Activated CD4-positive, alpha-beta memory T cell treated with anti-CD3 and anti-CD28 coated beads for 36 hours (primary cell): ENCODE measurements at regions of chr12 and their contacts with region 1.

Region 1: DNA sequence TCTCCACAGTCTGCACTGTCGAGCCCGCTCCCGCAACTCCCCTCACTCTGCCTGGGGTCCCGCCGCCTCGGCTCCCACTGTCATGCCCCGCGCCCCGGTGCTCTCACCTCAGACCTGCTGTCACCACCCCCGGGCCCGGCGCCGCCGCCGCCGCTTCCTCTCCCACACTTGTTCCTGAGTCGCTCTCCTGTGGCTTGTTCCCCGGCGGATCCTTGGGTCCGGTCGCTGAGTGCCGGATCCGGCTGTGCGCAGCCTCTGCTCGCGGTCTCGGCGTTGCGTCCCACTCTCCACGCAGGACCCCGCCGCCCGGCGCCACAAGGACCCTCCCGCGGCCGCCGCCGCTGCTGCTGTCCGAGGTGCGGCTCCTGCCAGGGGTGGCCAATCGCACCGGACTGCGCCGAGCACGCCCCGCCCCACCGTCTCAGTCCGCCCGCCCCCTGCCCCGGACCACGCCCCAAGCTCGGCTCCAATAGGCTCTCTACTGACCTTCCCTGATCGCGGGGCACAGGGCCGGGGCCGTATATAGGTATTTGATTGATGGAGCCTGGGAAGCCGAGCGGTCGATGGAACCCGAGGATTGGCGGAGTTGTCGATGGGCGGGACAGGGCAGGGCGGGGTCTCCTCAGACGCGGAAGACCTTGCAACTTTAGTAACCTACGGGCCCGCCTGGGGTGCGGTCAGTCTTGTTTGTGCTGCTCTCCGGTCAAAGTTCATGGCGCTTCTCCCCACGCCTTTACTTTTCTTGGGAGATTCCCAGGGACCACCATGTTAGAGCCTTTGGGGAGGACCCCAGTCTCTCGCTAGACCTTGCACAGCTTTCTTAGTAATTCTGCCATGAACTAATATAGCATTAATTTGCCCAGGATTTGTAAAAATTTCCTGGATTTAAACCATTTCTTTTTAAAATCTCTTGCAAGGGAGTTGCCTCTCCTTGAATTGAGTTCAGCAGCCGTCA is at the start of gene TAOK3:
- DNase-seq: peak; percentile 99
- H3K4me3 Mint-ChIP-seq: peak within 1 kb of the TSS; percentile 90
- H3K27ac Mint-ChIP-seq: peak within 1 kb of the TSS; percentile 95
- H3K4me1 Mint-ChIP-seq: peaks cover 43% of the 10 kb centered on the region
- H3K27me3 Mint-ChIP-seq: no peaks in the 10 kb centered on the region
- total RNA-seq, gene TAOK3: 47.5 to 50.4 TPM

Region 2: DNA sequence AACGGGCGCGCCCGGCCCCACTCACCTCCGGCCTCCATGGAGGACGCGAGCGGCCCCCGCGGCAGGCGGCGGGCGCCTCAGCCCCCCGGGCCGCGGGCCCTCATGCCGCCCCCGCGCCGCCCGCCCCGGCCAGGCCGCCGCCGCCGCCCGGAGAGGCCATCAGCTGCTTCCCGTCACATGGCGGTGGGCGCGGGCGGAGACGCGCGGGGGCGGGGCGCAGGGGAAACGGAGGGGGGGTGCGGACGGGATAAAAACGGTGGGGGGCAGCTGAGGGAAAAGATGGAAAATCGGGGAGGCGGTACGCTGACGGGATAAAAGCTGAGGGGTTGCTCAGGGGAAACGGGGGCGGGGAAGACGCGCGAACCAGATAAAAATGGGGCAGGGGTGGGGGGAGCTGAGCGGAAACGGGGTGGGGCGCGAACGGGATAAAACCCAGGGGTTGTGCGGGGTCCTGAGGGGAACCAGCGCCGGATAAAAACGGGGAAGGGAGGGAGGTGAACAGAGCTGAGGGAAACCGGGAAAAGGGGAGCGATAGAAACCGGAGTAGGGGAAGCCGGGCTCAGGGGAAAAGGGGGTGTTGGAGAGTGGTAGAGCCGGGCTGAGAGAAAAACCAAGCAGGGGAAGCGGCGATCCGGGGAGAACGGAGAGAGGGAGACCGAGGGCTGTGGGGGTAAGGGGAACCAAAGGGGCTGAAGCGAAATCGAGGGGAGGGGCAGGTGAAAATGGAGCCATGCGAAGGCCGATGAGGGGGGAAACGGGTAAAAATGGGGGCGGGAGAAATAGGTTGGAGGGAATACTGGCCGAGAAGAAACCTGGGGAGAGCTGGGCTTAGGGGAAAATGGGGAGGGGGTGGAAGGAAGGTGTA is 311.6 kb before region 1 on chr12 and contains the start of gene WSB2:
- CTCF ChIA-PET with region 1: interaction called, 5 read pairs
- POLR2A ChIA-PET with region 1: interaction called, 3 read pairs
- intact Hi-C with region 1: loop called (anchors 2 kb)
- DNase-seq: peak; percentile 73
- H3K4me3 Mint-ChIP-seq: peak within 1 kb of the TSS; percentile 81
- H3K27ac Mint-ChIP-seq: peak within 1 kb of the TSS; percentile 92
- H3K4me1 Mint-ChIP-seq: peaks cover 48% of the 10 kb centered on the region
- H3K27me3 Mint-ChIP-seq: no peaks in the 10 kb centered on the region
- total RNA-seq, gene WSB2: 93.2 to 102 TPM

Region 3: GRCh38 chr12:118164798-118165486 is 207.9 kb before region 1 on chr12:
- CTCF ChIA-PET with region 1: interaction called, 69 read pairs
- POLR2A ChIA-PET with region 1: interaction called, 6 read pairs
- intact Hi-C with region 1: loop called (anchors 1 kb)
- DNase-seq: peak; percentile 33
- H3K4me3 Mint-ChIP-seq: no peak overlapping the region
- H3K27ac Mint-ChIP-seq: peak overlapping the region; percentile 30
- H3K4me1 Mint-ChIP-seq: peaks cover 37% of the 10 kb centered on the region
- H3K27me3 Mint-ChIP-seq: no peaks in the 10 kb centered on the region

Region 4: DNA sequence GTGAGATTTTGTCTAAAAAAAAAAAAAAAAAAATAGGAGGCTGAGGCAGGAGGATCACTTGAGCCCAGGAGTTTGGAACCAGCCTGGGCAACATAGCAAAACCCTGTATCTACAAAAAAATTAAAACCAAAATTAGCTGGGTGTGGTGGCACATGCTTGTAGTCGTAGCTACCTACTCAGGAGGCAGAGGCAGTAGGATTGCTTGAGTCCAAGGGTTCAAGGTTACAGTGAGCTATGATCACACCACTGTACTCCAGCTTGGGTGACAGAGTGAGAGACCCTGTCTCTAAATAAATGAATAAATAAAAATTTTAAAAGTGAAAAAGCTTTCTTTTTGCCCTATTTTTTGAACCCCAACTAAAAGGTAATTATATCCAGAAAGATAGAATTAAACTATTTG is 123.3 kb before region 1 on chr12:
- CTCF ChIA-PET with region 1: interaction called, 11 read pairs
- POLR2A ChIA-PET with region 1: no interaction called
- intact Hi-C with region 1: no loop called
- DNase-seq: no peak
- H3K4me3 Mint-ChIP-seq: no peak overlapping the region
- H3K27ac Mint-ChIP-seq: no peak overlapping the region
- H3K4me1 Mint-ChIP-seq: no peaks in the 10 kb centered on the region
- H3K27me3 Mint-ChIP-seq: no peaks in the 10 kb centered on the region

Region 5: GRCh38 chr12:118307069-118307954 is 65.5 kb before region 1 on chr12:
- CTCF ChIA-PET with region 1: interaction called, 35 read pairs
- POLR2A ChIA-PET with region 1: interaction called, 7 read pairs
- intact Hi-C with region 1: loop called (anchors 1 kb)
- DNase-seq: peak; percentile 79
- H3K4me3 Mint-ChIP-seq: peak overlapping the region; percentile 64
- H3K27ac Mint-ChIP-seq: peak overlapping the region; percentile 86
- H3K4me1 Mint-ChIP-seq: peaks cover 41% of the 10 kb centered on the region
- H3K27me3 Mint-ChIP-seq: no peaks in the 10 kb centered on the region

Region 6: DNA sequence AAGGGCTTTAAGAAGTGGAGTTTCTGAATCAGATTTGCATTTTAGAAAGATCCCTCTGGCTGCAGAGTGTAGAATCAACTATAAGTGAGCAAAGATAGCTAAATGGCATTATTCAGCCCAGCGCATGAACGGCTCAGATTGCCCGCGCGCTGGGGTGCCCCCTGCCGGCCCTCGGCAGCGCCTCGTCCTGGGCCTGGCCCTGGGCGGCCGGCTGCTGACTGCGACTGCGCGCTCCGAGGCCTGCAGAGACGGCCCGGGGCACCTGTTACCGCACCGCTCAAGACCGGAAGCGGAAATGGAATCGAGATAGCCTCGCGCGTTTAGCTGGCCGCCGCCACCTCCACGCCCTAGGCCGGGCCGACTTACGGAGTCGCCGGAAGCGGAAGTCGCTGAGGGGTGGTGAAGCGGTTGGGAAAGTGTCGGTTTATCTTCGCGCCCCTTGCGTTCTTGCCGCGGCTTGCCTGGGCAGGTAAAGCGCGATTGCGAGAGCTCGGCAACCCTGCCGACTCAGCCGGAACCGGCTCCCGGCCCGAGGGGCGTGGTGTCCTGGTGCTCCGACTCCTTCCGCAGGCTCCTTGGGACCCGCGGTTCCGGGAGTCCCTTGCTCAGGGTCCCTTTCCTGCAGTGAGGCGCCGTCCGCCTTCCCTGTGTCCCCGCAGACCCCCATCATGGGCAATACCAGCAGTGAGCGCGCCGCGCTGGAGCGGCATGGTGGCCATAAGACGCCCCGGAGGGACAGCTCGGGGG is 1294.9 kb after region 1 on chr12 and contains the start of gene PRKAB1:
- CTCF ChIA-PET with region 1: interaction called, 3 read pairs
- POLR2A ChIA-PET with region 1: no interaction called
- intact Hi-C with region 1: loop called (anchors 10 kb)
- DNase-seq: peak; percentile 98
- H3K4me3 Mint-ChIP-seq: peak within 1 kb of the TSS; percentile 82
- H3K27ac Mint-ChIP-seq: peak within 1 kb of the TSS; percentile 88
- H3K4me1 Mint-ChIP-seq: peaks cover 48% of the 10 kb centered on the region
- H3K27me3 Mint-ChIP-seq: no peaks in the 10 kb centered on the region
- total RNA-seq, gene PRKAB1: 27.3 to 29.3 TPM